ENCODE measurements at regions of chr10 and their contacts with region 1.

Region 1: DNA sequence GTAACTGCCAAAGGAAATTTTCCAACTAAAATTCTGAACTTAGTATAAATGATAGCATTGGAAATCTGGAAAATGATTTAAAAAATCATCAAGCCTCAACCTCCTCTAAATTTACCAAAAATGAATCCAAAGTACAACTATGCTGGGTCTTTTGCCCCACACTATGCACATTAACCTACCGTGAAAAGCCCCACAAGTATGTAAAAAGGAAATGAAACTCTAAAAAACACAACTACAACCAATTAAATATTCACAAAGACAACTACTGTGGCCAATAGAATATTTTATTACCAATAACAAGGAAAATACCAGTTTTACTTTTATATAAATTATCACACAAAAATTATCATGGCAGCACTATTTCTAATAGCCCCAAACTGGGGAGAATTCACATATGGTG is 19.3 kb downstream of the EIF3A start:
- DNase-seq: no peak
- H3K4me3 ChIP-seq: no peak overlapping the region
- H3K27ac ChIP-seq: no peak overlapping the region
- H3K4me1 ChIP-seq: no peaks in the 10 kb centered on the region
- H3K27me3 ChIP-seq: no peaks in the 10 kb centered on the region
- CTCF ChIP-seq: no peak
- POLR2A ChIP-seq: no peak

Region 2: GRCh38 chr10:119045561-119045960 is 15.8 kb before region 1 on chr10:
- CTCF ChIA-PET with region 1: interaction called, 3 read pairs
- POLR2A ChIA-PET with region 1: no interaction called
- dilution Hi-C with region 1: no loop called
- intact Hi-C with region 1: loop called (anchors 2 kb)
- DNase-seq: no peak
- H3K4me3 ChIP-seq: no peak overlapping the region
- H3K27ac ChIP-seq: no peak overlapping the region
- H3K4me1 ChIP-seq: no peaks in the 10 kb centered on the region
- H3K27me3 ChIP-seq: no peaks in the 10 kb centered on the region
- CTCF ChIP-seq: no peak
- POLR2A ChIP-seq: no peak

Region 3: GRCh38 chr10:119575506-119575905 is 514.2 kb after region 1 on chr10:
- CTCF ChIA-PET with region 1: no interaction called
- POLR2A ChIA-PET with region 1: no interaction called
- dilution Hi-C with region 1: no loop called
- intact Hi-C with region 1: loop called (anchors 10 kb)
- DNase-seq: no peak
- H3K4me3 ChIP-seq: no peak overlapping the region
- H3K27ac ChIP-seq: no peak overlapping the region
- H3K4me1 ChIP-seq: no peaks in the 10 kb centered on the region
- H3K27me3 ChIP-seq: no peaks in the 10 kb centered on the region
- CTCF ChIP-seq: no peak
- POLR2A ChIP-seq: no peak

Measured in endothelial cell of umbilical vein (primary cell).